ENCODE measurements at regions of chr1 and their contacts with region 1.

Region 1: DNA sequence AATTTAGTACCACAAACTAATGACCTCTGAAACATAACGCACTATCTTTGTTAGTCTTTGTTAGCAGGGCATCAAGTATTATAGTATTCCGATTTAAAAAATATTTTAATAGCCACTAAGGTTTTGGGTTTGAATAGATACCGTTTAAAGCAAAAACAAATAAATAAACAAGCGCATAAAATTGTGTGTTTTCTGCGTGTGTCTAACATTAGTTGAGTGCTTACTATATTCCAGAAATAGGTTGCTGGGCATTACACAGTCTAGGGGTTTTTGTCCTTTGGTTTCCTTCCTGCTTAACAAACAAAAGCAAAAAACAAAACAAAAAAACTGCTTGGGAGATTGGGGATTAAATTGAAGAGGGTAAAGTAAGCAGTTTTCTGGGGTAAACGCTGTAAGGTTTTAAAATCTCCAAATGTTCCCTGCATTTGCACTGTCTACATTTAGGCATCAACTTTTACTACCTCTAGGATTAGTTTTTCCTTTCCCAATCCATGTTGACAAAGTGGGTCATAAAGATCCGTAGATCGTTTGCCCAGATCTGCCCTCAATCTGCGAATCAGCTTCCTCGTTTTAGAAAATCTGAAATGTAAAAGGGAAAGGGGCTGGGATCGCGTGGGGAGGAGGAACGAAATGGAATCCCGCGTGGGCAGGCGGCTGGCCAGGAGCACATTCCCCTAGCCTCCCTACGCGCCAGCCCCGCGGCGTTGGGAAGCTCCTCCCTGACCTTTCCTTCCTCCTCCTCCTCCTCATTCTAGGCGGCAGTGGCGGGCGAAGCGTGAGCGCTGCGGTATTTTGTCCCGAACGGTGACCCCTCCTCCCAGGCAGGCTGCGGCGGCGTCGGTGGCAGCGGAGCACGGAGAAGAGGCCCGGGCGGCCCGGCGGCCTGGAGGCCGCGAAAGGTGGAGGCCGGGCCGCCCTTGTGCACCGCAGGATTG is at the start of gene KCTD3:
- DNase-seq: peak; percentile 91
- ATAC-seq: peak; percentile 97
- total RNA-seq, gene KCTD3: 13.0 TPM

Region 2: DNA sequence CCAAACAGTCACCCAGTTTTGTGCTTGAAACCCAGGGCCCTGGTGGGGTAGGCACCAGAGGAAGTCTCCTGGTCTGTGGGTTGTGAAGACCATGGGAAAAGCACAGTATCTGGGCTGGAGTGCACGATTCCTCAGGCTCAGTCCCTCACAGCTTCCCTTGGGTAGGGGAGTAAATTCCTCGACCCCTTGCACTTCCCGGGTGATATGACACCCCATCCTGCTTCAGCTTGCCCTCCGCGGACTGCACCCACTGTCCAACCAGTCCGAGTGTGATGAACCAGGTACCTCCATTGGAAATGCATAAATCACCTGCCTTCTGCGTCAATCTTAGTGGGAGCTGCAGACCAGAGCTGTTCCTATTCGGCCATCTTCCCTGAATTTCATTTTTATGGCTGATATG is 133.6 kb before region 1 on chr1:
- intact Hi-C with region 1: no loop called
- DNase-seq: no peak
- ATAC-seq: no peak

Region 3: GRCh38 chr1:215606564-215607168 is 39.8 kb after region 1 on chr1:
- intact Hi-C with region 1: loop called (anchors 5 kb)
- DNase-seq: no peak
- ATAC-seq: no peak

Region 4: GRCh38 chr1:215665215-215665614 is 98.4 kb after region 1 on chr1:
- intact Hi-C with region 1: no loop called
- DNase-seq: no peak
- ATAC-seq: no peak